ENCODE measurements at regions of chr16 and their contacts with region 1.

Region 1: GRCh38 chr16:67561824-67562525 is 351 bp upstream of the CTCF start:
- DNase-seq: peak; percentile 96
- H3K4me3 ChIP-seq: peak overlapping the region; percentile 17 to 70 (median 64)
- H3K27ac ChIP-seq: peak overlapping the region; percentile 84
- H3K4me1 ChIP-seq: peaks cover 18% of the 10 kb centered on the region
- H3K27me3 ChIP-seq: no peaks in the 10 kb centered on the region
- CTCF ChIP-seq: no peak
- POLR2A ChIP-seq: peak; percentile 81

Region 2: DNA sequence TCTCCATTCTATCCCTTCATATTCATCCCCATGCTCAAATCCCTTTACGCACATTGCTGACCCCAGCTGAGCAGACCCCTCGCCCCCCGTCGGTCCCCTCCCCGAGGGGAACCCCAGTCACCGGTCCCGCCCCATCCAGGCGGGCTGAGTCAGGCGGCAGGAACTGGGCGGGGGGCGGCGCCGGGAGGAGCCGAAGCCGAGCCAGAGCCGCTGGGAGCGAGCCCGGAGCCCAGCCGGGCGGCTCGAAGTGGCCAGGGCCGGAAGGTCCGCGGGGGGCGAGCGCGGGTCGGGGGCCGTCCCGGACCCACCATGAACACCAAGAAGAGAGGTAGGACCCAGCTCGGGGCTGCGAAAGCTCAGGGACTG is 24.7 kb before region 1 on chr16:
- CTCF ChIA-PET with region 1: interaction called, 10 read pairs
- POLR2A ChIA-PET with region 1: interaction called, 5 read pairs
- dilution Hi-C with region 1: no loop called
- intact Hi-C with region 1: loop called (anchors 1 kb)
- DNase-seq: peak; percentile 79
- H3K4me3 ChIP-seq: peak overlapping the region; percentile 73 to 89 (median 88)
- H3K27ac ChIP-seq: peak overlapping the region; percentile 93
- H3K4me1 ChIP-seq: peaks cover 24% of the 10 kb centered on the region
- H3K27me3 ChIP-seq: no peaks in the 10 kb centered on the region
- CTCF ChIP-seq: no peak
- POLR2A ChIP-seq: peak; percentile 80

Region 3: DNA sequence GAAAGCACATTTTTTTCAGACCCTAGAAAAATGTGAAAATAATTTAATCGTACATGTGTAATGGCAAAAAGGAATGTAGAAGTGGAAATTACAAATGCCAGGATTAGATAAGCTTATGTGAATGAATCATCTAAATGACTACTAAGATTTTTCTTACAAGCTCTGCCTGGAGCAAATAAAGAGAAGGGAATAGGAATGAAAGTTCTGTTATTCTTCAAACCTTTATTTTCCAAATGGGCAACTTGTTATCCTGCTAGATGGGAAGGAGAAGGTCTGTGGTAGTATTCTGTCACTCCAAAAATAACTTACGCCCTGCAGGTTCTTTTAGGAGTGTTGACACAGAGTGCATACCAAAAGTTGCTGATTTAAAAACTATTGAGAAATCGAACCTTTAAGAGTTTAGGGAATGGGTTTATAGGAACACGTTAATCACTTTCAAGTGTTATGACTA is 10.0 kb after region 1 on chr16:
- CTCF ChIA-PET with region 1: interaction called, 14 read pairs
- POLR2A ChIA-PET with region 1: no interaction called
- dilution Hi-C with region 1: no loop called
- intact Hi-C with region 1: no loop called
- DNase-seq: peak; percentile 68
- H3K4me3 ChIP-seq: no peak overlapping the region
- H3K27ac ChIP-seq: peak overlapping the region; percentile 84
- H3K4me1 ChIP-seq: peaks cover 20% of the 10 kb centered on the region
- H3K27me3 ChIP-seq: no peaks in the 10 kb centered on the region
- CTCF ChIP-seq: no peak
- POLR2A ChIP-seq: no peak

Region 4: DNA sequence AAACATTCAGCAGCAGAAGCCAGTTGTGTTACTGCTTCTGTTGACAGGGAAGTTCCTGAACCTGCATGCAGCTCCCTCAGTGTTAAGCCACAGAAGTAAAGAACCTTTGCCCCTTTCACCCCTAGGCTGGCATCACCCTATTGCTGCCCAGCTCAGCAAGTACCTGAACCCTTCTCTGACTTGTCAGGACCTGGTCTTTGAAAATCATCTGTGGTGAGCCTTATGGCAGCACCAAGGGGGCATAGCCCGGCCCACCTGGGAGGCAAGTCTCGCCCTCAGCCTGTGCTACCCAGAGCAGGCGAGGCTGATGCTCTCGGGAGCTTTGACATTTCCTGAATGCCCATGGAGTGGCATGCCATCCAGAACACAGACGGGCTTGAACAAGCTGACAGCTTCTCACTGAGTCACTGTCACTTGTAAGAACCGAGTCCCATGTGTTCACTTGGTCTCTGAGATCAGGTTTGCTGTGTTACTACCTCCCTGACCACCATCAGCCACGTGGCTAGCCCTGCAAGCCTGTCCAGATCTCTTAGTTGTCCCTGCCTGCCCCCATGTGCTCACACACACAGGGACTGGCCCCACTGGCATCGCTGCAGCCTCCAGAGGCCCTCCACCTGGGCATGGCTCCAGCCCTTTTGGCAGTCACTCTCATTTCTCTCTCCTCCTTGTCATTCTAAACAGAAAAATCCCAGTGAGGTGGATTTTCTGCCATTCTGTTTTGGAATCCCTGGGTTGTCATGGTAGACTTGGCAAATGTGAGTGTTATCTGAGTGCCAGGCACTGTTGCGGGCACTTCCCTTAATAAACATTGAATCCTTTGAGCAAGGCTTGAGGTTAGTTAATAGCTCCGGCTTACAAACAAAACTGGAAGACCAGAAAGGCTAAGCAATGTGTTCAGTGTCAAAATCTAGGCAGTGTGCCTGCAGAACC is 80.1 kb after region 1 on chr16:
- CTCF ChIA-PET with region 1: interaction called, 48 read pairs
- POLR2A ChIA-PET with region 1: no interaction called
- dilution Hi-C with region 1: no loop called
- intact Hi-C with region 1: loop called (anchors 1 kb)
- DNase-seq: peak; percentile 52
- H3K4me3 ChIP-seq: no peak overlapping the region
- H3K27ac ChIP-seq: no peak overlapping the region
- H3K4me1 ChIP-seq: no peaks in the 10 kb centered on the region
- H3K27me3 ChIP-seq: no peaks in the 10 kb centered on the region
- CTCF ChIP-seq: no peak
- POLR2A ChIP-seq: no peak

Region 5: GRCh38 chr16:67667817-67668494 is 106.0 kb after region 1 on chr16:
- CTCF ChIA-PET with region 1: interaction called, 8 read pairs
- POLR2A ChIA-PET with region 1: no interaction called
- dilution Hi-C with region 1: no loop called
- intact Hi-C with region 1: loop called (anchors 1 kb)
- DNase-seq: peak; percentile 92
- H3K4me3 ChIP-seq: no peak overlapping the region
- H3K27ac ChIP-seq: no peak overlapping the region
- H3K4me1 ChIP-seq: peaks cover 17% of the 10 kb centered on the region
- H3K27me3 ChIP-seq: no peaks in the 10 kb centered on the region
- CTCF ChIP-seq: peak; percentile 85 to 98
- POLR2A ChIP-seq: no peak

Measured in endothelial cell of umbilical vein (primary cell).